Common myeloid progenitor, CD34-positive (primary cell): ENCODE measurements at regions of chr2 and their contacts with region 1.

Region 1: GRCh38 chr2:190853531-190854383 is 26.9 kb upstream of the GLS start:
- DNase-seq: peak in 2 of 3 donors; percentile 42 to 48
- H3K4me3 ChIP-seq: no peak overlapping the region
- H3K27ac ChIP-seq: no peak overlapping the region
- H3K4me1 ChIP-seq: peaks cover 0 to 5% (median 0%) of the 10 kb centered on the region in 4 experiments
- H3K27me3 ChIP-seq: no peaks in the 10 kb centered on the region

Region 2: GRCh38 chr2:190838492-190838910 is 15.3 kb before region 1 on chr2:
- CTCF ChIA-PET with region 1: interaction called, 11 read pairs
- POLR2A ChIA-PET with region 1: no interaction called
- DNase-seq: peak in 2 of 3 donors; percentile 22 to 42
- H3K4me3 ChIP-seq: no peak overlapping the region
- H3K27ac ChIP-seq: no peak overlapping the region
- H3K4me1 ChIP-seq: no peaks in the 10 kb centered on the region
- H3K27me3 ChIP-seq: no peaks in the 10 kb centered on the region

Region 3: DNA sequence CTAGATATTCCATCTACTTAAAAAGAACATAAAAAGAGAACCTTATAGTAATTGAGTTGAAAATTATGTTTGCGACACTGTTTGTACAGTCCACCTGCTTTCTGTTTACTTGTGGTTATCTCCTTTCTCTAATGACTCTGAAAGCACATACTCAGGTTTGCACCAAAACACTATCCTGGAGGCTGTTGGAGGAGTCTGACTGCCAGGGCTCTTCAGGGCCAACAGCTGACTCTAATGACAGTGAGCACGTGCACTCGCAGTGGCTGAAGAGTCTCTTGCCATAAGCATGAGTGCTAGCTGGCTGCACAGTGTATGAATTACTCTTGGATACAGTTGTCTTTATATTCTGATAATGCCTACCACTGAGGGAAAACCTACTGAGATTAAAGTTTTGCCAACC is 10.2 kb after region 1 on chr2:
- CTCF ChIA-PET with region 1: interaction called, 18 read pairs
- POLR2A ChIA-PET with region 1: no interaction called
- DNase-seq: no peak
- H3K4me3 ChIP-seq: no peak overlapping the region
- H3K27ac ChIP-seq: no peak overlapping the region
- H3K4me1 ChIP-seq: peaks cover 0 to 8% (median 4%) of the 10 kb centered on the region in 4 experiments
- H3K27me3 ChIP-seq: no peaks in the 10 kb centered on the region

Region 4: GRCh38 chr2:190880378-190881073 is 26.8 kb after region 1 on chr2 and contains the start of gene GLS:
- CTCF ChIA-PET with region 1: interaction called, 11 read pairs
- POLR2A ChIA-PET with region 1: interaction called, 5 read pairs
- DNase-seq: peak; percentile 97 to 98 (median 98)
- H3K4me3 ChIP-seq: peak within 1 kb of the TSS; percentile 70 to 94 (median 89)
- H3K27ac ChIP-seq: peak within 1 kb of the TSS; percentile 83 to 92
- H3K4me1 ChIP-seq: peaks cover 25 to 70% (median 46%) of the 10 kb centered on the region in 4 experiments
- H3K27me3 ChIP-seq: no peaks in the 10 kb centered on the region

Region 5: DNA sequence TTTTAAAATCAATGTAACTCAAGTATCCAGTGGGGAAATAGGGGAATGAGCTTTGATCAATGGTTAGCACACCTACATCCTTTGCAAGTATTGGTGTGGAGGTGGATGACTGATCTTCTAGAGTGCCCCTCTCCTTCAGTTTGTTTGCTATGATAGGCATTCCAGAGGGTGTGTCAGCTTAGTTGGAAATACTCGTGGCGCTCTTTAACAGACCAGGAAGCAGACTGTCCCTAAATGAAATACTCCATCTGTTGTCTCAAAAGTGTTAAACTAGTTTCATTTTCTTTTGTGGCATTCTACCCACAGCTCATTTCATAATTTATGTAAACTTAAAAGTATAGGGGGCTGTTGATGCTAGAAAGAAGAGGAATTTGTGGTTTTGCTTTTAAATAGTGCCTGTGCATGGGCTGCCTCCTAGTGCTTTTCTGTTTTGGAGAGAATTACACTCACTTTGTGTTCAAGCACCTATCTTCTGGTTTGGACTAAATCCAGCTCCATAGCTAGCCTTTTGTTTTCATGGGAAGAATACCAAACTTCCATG is 94.0 kb after region 1 on chr2:
- CTCF ChIA-PET with region 1: interaction called, 11 read pairs
- POLR2A ChIA-PET with region 1: no interaction called
- DNase-seq: peak; percentile 83 to 95 (median 92)
- H3K4me3 ChIP-seq: peak overlapping the region in 6 of 7 experiments; percentile 44 to 78 (median 58)
- H3K27ac ChIP-seq: peak overlapping the region; percentile 77 to 85
- H3K4me1 ChIP-seq: peaks cover 19 to 33% (median 22%) of the 10 kb centered on the region in 4 experiments
- H3K27me3 ChIP-seq: no peaks in the 10 kb centered on the region